ENCODE measurements at regions of chr2 and their contacts with region 1.

Region 1: GRCh38 chr2:68909793-68910674 is 38.8 kb upstream of the BMP10 start:
- DNase-seq: peak; percentile 59 to 86
- ATAC-seq: peak; percentile 61

Region 2: DNA sequence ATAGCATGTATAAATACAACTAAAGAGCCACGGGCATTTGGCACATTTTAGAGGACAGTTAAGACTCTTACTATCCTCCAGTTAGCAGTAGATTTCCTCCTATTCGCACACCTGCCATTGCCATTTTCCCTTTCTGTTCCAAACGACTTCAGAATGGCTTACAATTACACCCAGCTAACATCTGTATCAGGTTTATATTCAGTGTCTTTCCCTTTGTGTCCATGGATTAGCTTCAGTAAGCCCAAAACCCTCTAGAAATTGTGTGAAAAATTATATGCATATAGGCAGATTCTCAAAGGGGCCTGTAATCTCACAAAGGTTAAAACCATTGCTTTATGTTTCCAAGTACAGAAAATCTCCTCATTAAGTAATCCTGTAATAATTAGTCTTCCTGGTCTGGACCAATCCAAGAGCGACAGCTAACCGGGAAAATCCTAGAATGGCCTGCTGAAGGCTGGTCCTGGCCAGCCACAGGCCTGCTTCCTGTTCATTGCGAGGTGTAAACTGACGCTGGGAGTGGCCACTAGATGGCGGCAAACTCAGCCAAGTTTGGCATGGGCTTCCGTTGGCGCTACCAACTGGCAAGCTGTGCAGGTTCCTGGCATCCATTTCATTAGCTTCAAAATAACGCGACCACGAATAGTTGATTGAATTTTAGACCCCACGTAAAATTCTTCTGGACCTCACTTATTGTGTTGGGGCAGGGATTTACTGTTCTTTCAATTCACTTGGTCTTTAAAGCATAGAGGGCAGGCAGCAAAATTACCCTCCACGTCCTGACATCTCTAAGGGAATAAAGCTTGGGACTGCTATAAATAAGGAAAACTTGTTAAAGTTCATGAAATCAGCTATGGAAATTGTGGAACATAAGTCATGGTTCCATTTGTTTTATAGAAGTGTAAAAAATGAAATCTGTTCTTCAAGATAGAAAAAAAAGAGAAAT is 158.4 kb before region 1 on chr2:
- intact Hi-C with region 1: loop called in 1 of 2 experiments (anchors 5 kb)
- DNase-seq: peak; percentile 84 to 96
- ATAC-seq: peak; percentile 96

Region 3: DNA sequence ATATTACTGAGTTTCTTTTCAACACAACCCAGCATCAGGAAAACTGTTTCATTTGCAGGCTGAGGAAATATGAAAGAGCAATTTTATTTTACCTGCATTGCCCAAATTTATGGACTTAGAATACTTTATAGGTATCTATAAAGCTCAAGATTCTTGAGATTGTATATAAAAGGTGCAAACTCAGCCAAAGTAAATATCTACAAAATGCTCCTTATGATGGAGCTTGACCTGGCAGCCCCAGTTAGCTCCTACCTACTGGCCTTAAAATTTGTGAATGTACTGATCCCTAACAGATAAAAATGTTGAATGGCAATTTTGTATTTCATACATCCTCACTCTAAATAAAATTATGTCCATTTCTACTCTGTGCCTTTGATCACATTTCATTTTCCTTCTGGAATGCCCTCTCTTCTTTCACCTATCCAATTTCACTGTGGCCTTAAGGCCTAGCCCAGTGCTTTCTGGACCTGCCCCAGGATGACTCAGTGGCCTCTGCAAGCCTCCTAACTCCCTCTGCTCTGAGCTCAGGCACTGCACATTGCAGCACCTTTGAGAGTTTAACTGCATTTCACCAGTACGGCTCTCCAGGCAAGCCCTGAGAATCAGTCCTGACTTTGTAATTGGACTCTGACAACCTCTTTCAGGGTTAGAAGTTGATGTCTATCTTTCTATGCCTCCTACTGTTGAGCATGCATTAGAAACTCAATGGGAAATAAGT is 228.9 kb after region 1 on chr2:
- intact Hi-C with region 1: no loop called
- DNase-seq: peak; percentile 35 to 70
- ATAC-seq: peak; percentile 87

Measured in left colon (tissue), 2 donors.